GM13977 (cell line): ENCODE measurements at regions of chr11 and their contacts with region 1.

Region 1: GRCh38 chr11:56783448-56784041 is 35.0 kb upstream of the OR9G4 start:
- DNase-seq: peak; percentile 11
- CTCF ChIP-seq: peak; percentile 63

Region 2: GRCh38 chr11:55942785-55943392 is 840.7 kb before region 1 on chr11:
- in situ Hi-C with region 1: loop called (anchors 25 kb)
- DNase-seq: peak; percentile 7
- CTCF ChIP-seq: peak; percentile 49

Region 3: GRCh38 chr11:56688554-56689100 is 94.9 kb before region 1 on chr11:
- in situ Hi-C with region 1: loop called (anchors 25 kb)
- DNase-seq: no peak
- CTCF ChIP-seq: no peak